ENCODE measurements at regions of chr17 and their contacts with region 1.

Region 1: DNA sequence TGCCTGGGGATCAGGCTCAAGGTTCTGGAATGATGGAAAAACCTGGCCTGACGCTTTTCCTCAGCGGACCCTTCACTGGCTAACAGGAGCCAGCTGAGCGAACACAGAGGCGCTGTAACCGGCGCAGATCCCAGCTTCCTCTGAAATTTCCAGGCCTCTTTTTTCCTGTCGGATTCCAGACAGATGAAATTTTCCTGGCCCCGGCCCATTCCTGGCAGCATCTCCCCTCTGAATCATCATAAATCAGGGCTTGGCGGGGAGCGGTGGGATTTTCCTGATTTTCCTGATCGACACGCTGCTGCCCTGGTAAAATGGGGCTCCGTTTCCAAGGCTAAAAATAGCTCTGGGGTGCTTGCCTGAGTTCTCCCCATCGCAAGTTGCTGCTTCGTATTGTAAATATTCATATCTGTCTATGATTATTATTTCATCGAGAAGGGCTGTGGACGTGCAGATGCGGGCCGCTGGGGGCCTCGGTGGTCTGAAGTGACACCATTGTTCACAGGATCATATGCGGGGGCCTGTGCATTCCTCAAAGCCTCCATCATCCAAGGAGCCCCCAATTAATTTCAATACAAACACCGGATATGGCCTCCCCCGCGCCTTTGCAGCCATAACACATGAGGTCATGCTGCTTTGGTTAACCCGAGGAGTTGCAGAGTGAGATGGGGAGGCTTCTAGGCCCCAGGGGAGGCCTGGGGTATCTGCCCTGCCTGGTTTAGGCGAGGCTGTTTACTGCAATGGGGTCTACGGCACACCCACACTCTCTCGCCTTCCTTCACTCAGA is 45.8 kb upstream of the ETV4 start:
- DNase-seq: peak; percentile 9 to 45
- ATAC-seq: peak; percentile 72 to 73
- H3K4me3 ChIP-seq: peak overlapping the region in 1 of 4 donors; percentile 22
- H3K27ac ChIP-seq: peak overlapping the region; percentile 70 to 77 (median 74)
- H3K4me1 ChIP-seq: peaks cover 9 to 21% of the 10 kb centered on the region in 2 donors
- H3K27me3 ChIP-seq: no peaks in the 10 kb centered on the region
- CTCF ChIP-seq: no peak
- POLR2A ChIP-seq: no peak

Region 2: DNA sequence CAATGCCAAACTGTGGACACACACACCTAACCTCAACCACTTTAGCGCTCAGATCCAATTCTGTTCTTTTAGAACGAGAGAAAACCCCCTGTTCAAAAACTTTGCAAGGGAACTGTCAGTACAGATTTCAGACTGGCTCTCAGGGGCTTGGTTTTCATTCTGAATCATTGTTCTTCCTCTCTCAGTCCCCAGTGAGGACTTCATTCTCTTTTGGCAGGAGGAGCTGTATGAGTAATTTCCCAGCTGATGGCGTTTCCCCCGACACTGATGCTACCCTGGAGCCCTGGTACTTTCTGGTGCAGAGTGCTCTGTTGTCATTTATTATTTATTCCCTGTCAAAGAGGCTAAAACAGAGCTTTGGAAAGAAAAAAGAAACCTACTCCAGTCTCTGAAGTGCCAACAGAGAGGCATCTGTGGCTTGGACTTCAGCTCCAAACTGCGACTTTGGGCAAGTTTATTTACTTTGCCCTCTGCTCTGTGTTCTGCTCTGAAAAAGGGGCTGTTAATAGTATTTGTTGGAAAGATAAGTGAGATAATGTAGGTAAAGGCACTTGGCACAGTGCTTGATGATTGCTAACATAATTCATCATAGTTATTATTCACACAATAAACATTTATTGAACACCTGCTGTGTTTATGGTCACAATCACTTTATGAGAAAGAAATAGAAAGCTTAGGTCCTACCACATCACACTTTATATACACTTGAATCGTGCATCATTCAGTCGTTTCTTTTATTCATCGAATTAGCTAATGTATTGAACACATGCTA is 74.2 kb before region 1 on chr17:
- in situ Hi-C with region 1: no loop called
- intact Hi-C with region 1: no loop called
- DNase-seq: no peak
- ATAC-seq: no peak
- H3K4me3 ChIP-seq: no peak overlapping the region
- H3K27ac ChIP-seq: peak overlapping the region in 1 of 4 donors; percentile 16
- H3K4me1 ChIP-seq: peaks cover 10 to 19% of the 10 kb centered on the region in 2 donors
- H3K27me3 ChIP-seq: no peaks in the 10 kb centered on the region
- CTCF ChIP-seq: no peak
- POLR2A ChIP-seq: no peak

Region 3: GRCh38 chr17:43641416-43641815 is 49.4 kb after region 1 on chr17:
- in situ Hi-C with region 1: no loop called
- intact Hi-C with region 1: loop called (anchors 5 kb)
- DNase-seq: no peak
- ATAC-seq: no peak
- H3K4me3 ChIP-seq: no peak overlapping the region
- H3K27ac ChIP-seq: no peak overlapping the region
- H3K4me1 ChIP-seq: peaks cover 3 to 4% of the 10 kb centered on the region in 2 donors
- H3K27me3 ChIP-seq: peaks cover 0 to 18% (median 8%) of the 10 kb centered on the region in 3 donors
- CTCF ChIP-seq: no peak
- POLR2A ChIP-seq: no peak

Region 4: GRCh38 chr17:43676471-43676870 is 84.5 kb after region 1 on chr17:
- in situ Hi-C with region 1: no loop called
- intact Hi-C with region 1: no loop called
- DNase-seq: no peak
- ATAC-seq: no peak
- H3K4me3 ChIP-seq: no peak overlapping the region
- H3K27ac ChIP-seq: no peak overlapping the region
- H3K4me1 ChIP-seq: peaks cover 2 to 5% of the 10 kb centered on the region in 2 donors
- H3K27me3 ChIP-seq: no peaks in the 10 kb centered on the region
- CTCF ChIP-seq: no peak
- POLR2A ChIP-seq: no peak

Measured in gastrocnemius medialis (tissue), 4 donors.